Natural killer cell (primary cell): ENCODE measurements at regions of chr5 and their contacts with region 1.

Region 1: GRCh38 chr5:32709781-32710549 is 1.2 kb upstream of the NPR3 start:
- DNase-seq: peak; percentile 35 to 42
- ATAC-seq: peak; percentile 59 to 75 (median 67)
- H3K4me3 ChIP-seq: peak overlapping the region; percentile 36
- H3K4me3 Mint-ChIP-seq: peak overlapping the region; percentile 66
- H3K27ac ChIP-seq: no peak overlapping the region
- H3K27ac Mint-ChIP-seq: no peak overlapping the region
- H3K4me1 ChIP-seq: peaks cover 46% of the 10 kb centered on the region
- H3K4me1 Mint-ChIP-seq: peaks cover 35 to 44% of the 10 kb centered on the region in 2 donors
- H3K27me3 ChIP-seq: peaks cover 56% of the 10 kb centered on the region
- H3K27me3 Mint-ChIP-seq: peaks cover 46 to 64% of the 10 kb centered on the region in 2 donors
- CTCF ChIP-seq: peak; percentile 62

Region 2: GRCh38 chr5:32852535-32852934 is 142.6 kb after region 1 on chr5:
- intact Hi-C with region 1: loop called (anchors 1 kb)
- DNase-seq: peak in 1 of 2 donors; percentile 3
- ATAC-seq: peak in 2 of 3 donors; percentile 62 to 72
- H3K4me3 ChIP-seq: no peak overlapping the region
- H3K4me3 Mint-ChIP-seq: no peak overlapping the region
- H3K27ac ChIP-seq: no peak overlapping the region
- H3K27ac Mint-ChIP-seq: peak overlapping the region in 1 of 2 donors; percentile 19
- H3K4me1 ChIP-seq: no peaks in the 10 kb centered on the region
- H3K4me1 Mint-ChIP-seq: peaks cover 5% of the 10 kb centered on the region in 2 donors
- H3K27me3 ChIP-seq: no peaks in the 10 kb centered on the region
- H3K27me3 Mint-ChIP-seq: peaks cover 19 to 33% of the 10 kb centered on the region in 2 donors
- CTCF ChIP-seq: peak; percentile 44

Region 3: DNA sequence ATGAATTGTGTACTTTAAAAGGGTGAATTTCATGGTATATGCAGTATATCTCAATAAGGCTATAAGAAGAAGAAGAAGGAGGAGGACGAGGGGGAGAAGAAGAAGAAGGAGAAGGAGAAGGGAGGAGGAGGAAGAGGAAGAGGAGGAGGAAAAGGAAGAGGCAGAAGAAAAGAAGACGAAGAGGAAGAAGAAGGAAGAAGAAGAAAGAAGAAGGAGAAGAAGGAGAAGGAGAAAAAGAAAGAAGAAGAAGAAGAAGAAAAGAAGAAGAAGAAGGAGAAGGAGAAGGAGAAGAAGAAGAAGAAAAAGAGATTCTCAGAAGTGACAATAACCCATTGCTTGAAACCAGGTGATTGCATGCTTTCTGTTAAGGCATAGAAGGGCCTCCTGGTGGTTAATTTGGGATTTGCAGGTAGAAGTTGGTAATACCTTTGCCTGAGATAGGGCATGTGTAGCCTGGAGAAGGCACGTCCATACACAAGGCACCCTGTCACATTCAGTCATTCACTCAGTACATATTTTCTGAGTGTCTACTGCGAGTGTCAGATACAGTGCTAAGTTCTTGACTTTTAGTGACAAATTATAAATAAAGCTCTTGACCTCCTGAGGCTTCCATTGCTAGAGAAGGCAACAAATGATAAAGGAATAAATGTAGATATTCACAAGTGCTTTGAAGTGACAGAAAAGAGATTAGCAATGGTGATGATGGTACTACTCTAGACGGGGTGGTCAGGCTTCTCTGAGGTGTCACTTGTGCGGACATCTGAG is 232.4 kb after region 1 on chr5:
- intact Hi-C with region 1: loop called (anchors 10 kb)
- DNase-seq: peak in 1 of 2 donors; percentile 18
- ATAC-seq: peak in 1 of 3 donors; percentile 50
- H3K4me3 ChIP-seq: no peak overlapping the region
- H3K4me3 Mint-ChIP-seq: no peak overlapping the region
- H3K27ac ChIP-seq: no peak overlapping the region
- H3K27ac Mint-ChIP-seq: no peak overlapping the region
- H3K4me1 ChIP-seq: no peaks in the 10 kb centered on the region
- H3K4me1 Mint-ChIP-seq: no peaks in the 10 kb centered on the region
- H3K27me3 ChIP-seq: no peaks in the 10 kb centered on the region
- H3K27me3 Mint-ChIP-seq: peaks cover 0 to 2% of the 10 kb centered on the region in 2 donors
- CTCF ChIP-seq: peak; percentile 52